Heart left ventricle (tissue), 16 donors: ENCODE measurements at regions of chr4 and their contacts with region 1.

Region 1: GRCh38 chr4:122819708-122820449 is 6.8 kb upstream of the FGF2 start:
- DNase-seq: no peak
- ATAC-seq: no peak
- H3K4me3 ChIP-seq: no peak overlapping the region
- H3K27ac ChIP-seq: no peak overlapping the region
- H3K4me1 ChIP-seq: no peaks in the 10 kb centered on the region
- H3K27me3 ChIP-seq: no peaks in the 10 kb centered on the region
- CTCF ChIP-seq: no peak
- POLR2A ChIP-seq: no peak

Region 2: GRCh38 chr4:122652379-122652778 is 167.5 kb before region 1 on chr4:
- intact Hi-C with region 1: no loop called
- DNase-seq: no peak
- ATAC-seq: no peak
- H3K4me3 ChIP-seq: no peak overlapping the region
- H3K27ac ChIP-seq: no peak overlapping the region
- H3K4me1 ChIP-seq: no peaks in the 10 kb centered on the region
- H3K27me3 ChIP-seq: no peaks in the 10 kb centered on the region
- CTCF ChIP-seq: peak in 8 of 12 donors; percentile 11 to 46 (median 38)
- POLR2A ChIP-seq: no peak

Region 3: DNA sequence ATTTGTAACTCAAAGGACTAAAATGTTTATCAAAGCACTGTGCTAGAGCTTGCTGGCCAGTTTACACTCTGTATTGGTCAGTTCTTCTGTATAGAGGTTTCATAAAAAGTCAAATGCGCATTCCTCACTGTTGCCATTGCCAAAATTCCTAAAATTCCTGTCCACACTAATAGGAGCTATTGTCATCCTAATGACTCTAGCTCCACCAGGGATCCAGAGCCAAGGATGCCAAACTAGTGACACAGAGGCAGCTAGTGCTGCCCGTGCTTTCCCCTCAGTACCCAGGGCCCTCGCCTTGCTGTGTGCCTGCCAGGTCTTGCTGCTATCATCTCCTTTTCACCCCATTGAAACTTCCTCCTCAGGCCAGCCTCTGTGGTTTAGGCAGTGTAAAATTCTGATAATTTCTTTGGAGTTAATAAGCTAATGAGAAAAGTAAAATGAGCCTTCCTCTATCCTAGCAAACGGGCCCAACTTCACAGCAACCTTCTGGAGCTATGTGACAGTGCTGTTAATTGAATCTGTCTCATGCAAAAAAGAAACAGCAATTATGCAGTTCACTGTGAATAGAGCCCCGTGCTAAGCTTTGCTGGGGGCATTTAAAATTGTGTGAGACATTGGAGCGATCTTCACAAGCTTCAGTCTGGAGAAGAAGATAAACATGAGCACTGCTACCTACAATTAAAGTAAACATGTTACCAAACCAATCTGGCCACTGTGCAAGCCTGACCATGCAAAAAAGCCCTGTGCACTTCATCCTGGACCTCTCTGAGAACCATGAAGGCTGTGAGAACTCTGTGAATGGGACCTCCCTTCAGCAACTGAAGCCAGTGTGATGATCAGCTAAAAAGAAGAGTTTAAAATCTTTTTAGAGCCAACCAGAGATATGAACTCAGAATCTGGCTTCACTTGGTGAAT is 36.3 kb before region 1 on chr4:
- intact Hi-C with region 1: loop called in 1 of 10 experiments (anchors 5 kb)
- DNase-seq: peak; percentile 70 to 86 (median 73)
- ATAC-seq: peak; percentile 100
- H3K4me3 ChIP-seq: peak overlapping the region in 1 of 12 donors; percentile 18
- H3K27ac ChIP-seq: peak overlapping the region; percentile 46 to 86 (median 80)
- H3K4me1 ChIP-seq: peaks cover 0 to 20% (median 13%) of the 10 kb centered on the region in 12 donors
- H3K27me3 ChIP-seq: no peaks in the 10 kb centered on the region
- CTCF ChIP-seq: no peak
- POLR2A ChIP-seq: no peak